GM10248 (cell line): ENCODE measurements at regions of chr10 and their contacts with region 1.

Region 1: DNA sequence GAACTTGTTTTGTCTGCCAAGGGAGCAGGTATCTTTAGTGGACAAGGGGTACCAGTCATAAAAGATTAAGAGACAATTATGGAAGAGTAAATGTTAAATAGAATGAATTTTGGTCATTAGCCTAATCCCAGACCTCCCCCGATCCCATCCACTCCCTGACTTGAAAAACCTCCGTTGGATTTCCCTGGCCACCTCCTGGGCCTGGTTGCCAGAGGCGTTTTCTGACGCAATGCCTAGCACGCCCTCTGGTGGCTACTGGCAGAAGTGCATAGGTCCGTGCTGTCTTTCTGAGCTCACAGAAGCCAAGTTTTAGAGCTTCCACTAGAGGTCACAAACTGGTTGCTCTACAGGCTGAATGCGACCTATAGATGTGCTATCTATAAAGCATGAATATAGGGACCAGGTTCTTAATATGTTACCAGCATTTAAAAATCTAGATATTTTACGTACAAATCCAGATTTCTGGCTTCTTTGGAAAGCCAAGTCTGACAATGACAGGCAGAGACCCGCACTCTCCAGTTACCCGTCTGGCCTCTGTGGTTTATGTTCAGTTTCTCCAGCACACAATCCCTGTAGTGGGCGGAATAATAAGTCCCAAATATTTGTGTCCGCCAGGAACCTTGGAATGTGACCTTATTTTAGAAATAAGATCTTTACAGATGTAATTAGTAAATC is 39.8 kb downstream of the SPOCK2 start:
- DNase-seq: peak; percentile 87
- CTCF ChIP-seq: peak; percentile 100

Region 2: DNA sequence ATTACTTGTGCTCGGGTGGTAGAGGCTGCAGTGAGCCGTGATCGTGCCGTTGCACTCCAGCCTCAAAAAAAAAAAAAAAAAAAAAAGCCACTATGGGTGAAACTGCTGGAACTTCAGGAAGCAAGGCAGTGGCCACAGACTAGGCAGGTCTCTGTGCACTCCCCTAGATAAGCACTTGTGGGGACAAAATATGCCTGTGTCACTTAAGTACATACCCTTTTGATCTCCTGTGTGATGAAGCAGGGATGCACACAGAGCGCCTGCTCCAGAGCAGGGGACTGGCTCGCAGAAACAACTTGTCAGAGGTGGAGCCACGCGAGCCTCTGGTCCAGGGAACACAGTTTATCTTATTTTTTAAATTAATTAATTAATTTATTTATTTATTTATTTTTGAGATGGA is 154.7 kb before region 1 on chr10:
- CTCF ChIA-PET with region 1: interaction called, 54 read pairs
- POLR2A ChIA-PET with region 1: no interaction called
- DNase-seq: no peak
- CTCF ChIP-seq: no peak

Region 3: GRCh38 chr10:72001033-72001395 is 47.6 kb before region 1 on chr10:
- CTCF ChIA-PET with region 1: interaction called, 11 read pairs
- POLR2A ChIA-PET with region 1: no interaction called
- DNase-seq: no peak
- CTCF ChIP-seq: no peak

Region 4: GRCh38 chr10:72038458-72039001 is 10.1 kb before region 1 on chr10:
- CTCF ChIA-PET with region 1: interaction called, 34 read pairs
- POLR2A ChIA-PET with region 1: no interaction called
- DNase-seq: no peak
- CTCF ChIP-seq: no peak

Region 5: GRCh38 chr10:72079356-72079755 is 30.8 kb after region 1 on chr10:
- CTCF ChIA-PET with region 1: interaction called, 10 read pairs
- POLR2A ChIA-PET with region 1: no interaction called
- DNase-seq: no peak
- CTCF ChIP-seq: no peak

Region 6: GRCh38 chr10:72331601-72332422 is 283.2 kb after region 1 on chr10:
- CTCF ChIA-PET with region 1: interaction called, 38 read pairs
- POLR2A ChIA-PET with region 1: no interaction called
- DNase-seq: peak; percentile 63
- CTCF ChIP-seq: no peak

Region 7: GRCh38 chr10:73044378-73045285 is 996.0 kb after region 1 on chr10:
- CTCF ChIA-PET with region 1: no interaction called
- POLR2A ChIA-PET with region 1: no interaction called
- DNase-seq: no peak
- CTCF ChIP-seq: no peak